ENCODE measurements at regions of chr2 and their contacts with region 1.

Region 1: GRCh38 chr2:133953524-133953923 is 300.3 kb upstream of the MGAT5 start:
- DNase-seq: peak; percentile 44
- ATAC-seq: peak; percentile 84
- H3K4me3 Mint-ChIP-seq: peak overlapping the region; percentile 46
- H3K27ac Mint-ChIP-seq: peak overlapping the region; percentile 78
- H3K4me1 Mint-ChIP-seq: peaks cover 83% of the 10 kb centered on the region
- H3K27me3 Mint-ChIP-seq: no peaks in the 10 kb centered on the region
- CTCF ChIP-seq: no peak

Region 2: GRCh38 chr2:134021830-134022524 is 68.5 kb after region 1 on chr2:
- CTCF ChIA-PET with region 1: no interaction called
- POLR2A ChIA-PET with region 1: no interaction called
- intact Hi-C with region 1: loop called (anchors 1 kb)
- DNase-seq: no peak
- ATAC-seq: peak; percentile 98
- H3K4me3 Mint-ChIP-seq: peak overlapping the region; percentile 35
- H3K27ac Mint-ChIP-seq: peak overlapping the region; percentile 74
- H3K4me1 Mint-ChIP-seq: peaks cover 35% of the 10 kb centered on the region
- H3K27me3 Mint-ChIP-seq: no peaks in the 10 kb centered on the region
- CTCF ChIP-seq: no peak

Region 3: GRCh38 chr2:134154246-134154645 is 200.7 kb after region 1 on chr2:
- CTCF ChIA-PET with region 1: no interaction called
- POLR2A ChIA-PET with region 1: interaction called, 3 read pairs
- intact Hi-C with region 1: loop called (anchors 5 kb)
- DNase-seq: peak; percentile 36
- ATAC-seq: peak; percentile 56
- H3K4me3 Mint-ChIP-seq: peak overlapping the region; percentile 48
- H3K27ac Mint-ChIP-seq: peak overlapping the region; percentile 79
- H3K4me1 Mint-ChIP-seq: peaks cover 84% of the 10 kb centered on the region
- H3K27me3 Mint-ChIP-seq: no peaks in the 10 kb centered on the region
- CTCF ChIP-seq: no peak

Region 4: GRCh38 chr2:134253804-134254203 is 300.3 kb after region 1 on chr2 and contains the start of gene MGAT5:
- CTCF ChIA-PET with region 1: no interaction called
- POLR2A ChIA-PET with region 1: no interaction called
- intact Hi-C with region 1: loop called (anchors 5 kb)
- DNase-seq: no peak
- ATAC-seq: peak; percentile 43
- H3K4me3 Mint-ChIP-seq: peak within 1 kb of the TSS; percentile 74
- H3K27ac Mint-ChIP-seq: peak within 1 kb of the TSS; percentile 95
- H3K4me1 Mint-ChIP-seq: peaks cover 95% of the 10 kb centered on the region
- H3K27me3 Mint-ChIP-seq: no peaks in the 10 kb centered on the region
- CTCF ChIP-seq: no peak
- total RNA-seq, gene MGAT5: 66.7 and 69.0 TPM in 2 replicates